ENCODE measurements at regions of chr21 and their contacts with region 1.

Region 1: DNA sequence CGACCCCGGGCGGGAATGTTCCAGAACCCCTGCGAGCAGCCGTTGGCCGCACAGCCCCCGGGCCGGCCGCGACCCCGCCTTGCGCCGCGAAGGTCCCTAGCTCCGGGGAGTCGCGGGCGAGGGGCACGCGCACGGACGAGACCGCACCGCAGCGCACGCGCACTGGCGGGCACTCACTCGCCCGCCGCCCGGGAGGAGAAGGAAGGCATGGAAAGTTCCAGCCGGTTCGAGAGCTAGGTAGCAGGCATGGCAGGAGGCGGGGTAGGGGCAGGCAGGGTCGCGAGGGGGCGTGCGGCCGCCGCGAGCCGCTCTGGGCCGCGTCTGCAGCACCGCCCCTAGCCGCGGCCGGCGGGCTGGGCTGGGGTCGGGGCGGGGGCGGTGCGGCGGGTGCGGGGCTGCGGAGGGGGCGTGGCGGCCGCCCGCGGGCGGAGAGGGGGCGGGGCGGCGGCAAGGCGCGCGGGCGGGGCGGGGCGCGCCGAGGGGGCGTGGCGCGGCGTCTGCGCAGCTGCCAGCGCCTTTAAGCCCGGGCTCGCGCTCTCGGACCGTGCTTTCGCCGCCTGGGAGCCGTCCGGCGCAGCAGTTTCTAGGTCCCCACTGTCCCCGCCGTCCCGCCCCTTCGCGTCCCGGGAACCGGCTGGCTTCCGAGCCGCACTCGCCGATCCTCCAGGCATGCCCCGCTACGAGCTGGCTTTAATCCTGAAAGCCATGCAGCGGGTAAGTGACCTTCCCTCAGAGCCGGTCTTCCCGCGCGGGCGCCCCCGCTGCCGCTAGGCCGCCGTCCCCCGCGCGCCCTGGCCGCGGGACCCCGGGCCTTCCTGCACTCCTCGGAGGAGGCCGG is at the starts of genes MRPS6 and SLC5A3:
- DNase-seq: peak; percentile 58 to 87 (median 75)
- H3K4me3 ChIP-seq: peak within 1 kb of the TSS; percentile 65 to 89 (median 75)
- H3K27ac ChIP-seq: peak within 1 kb of the TSS; percentile 83 to 100 (median 95)
- H3K27me3 ChIP-seq: no peaks in the 10 kb centered on the region
- CTCF ChIP-seq: peak in 7 of 56 donors; percentile 2 to 20 (median 11)
- total RNA-seq, gene MRPS6: 22.1 to 132 (median 50.4) TPM
- total RNA-seq, gene SLC5A3: 11.1 to 102 (median 27.3) TPM

Region 2: GRCh38 chr21:33884376-33885171 is 188.7 kb before region 1 on chr21:
- intact Hi-C with region 1: no loop called
- DNase-seq: peak in 1 of 10 donors; percentile 27
- H3K4me3 ChIP-seq: no peak overlapping the region
- H3K27ac ChIP-seq: peak overlapping the region in 4 of 59 donors; percentile 6 to 69 (median 36)
- H3K27me3 ChIP-seq: no peaks in the 10 kb centered on the region
- CTCF ChIP-seq: no peak

Region 3: GRCh38 chr21:33924079-33924765 is 149.0 kb before region 1 on chr21:
- intact Hi-C with region 1: loop called in 1 of 2 experiments (anchors 2 kb)
- DNase-seq: peak; percentile 84 to 94 (median 90)
- H3K4me3 ChIP-seq: peak overlapping the region in 18 of 59 donors; percentile 5 to 43 (median 24)
- H3K27ac ChIP-seq: peak overlapping the region; percentile 51 to 98 (median 91)
- H3K27me3 ChIP-seq: no peaks in the 10 kb centered on the region
- CTCF ChIP-seq: peak; percentile 81 to 99 (median 97)

Region 4: DNA sequence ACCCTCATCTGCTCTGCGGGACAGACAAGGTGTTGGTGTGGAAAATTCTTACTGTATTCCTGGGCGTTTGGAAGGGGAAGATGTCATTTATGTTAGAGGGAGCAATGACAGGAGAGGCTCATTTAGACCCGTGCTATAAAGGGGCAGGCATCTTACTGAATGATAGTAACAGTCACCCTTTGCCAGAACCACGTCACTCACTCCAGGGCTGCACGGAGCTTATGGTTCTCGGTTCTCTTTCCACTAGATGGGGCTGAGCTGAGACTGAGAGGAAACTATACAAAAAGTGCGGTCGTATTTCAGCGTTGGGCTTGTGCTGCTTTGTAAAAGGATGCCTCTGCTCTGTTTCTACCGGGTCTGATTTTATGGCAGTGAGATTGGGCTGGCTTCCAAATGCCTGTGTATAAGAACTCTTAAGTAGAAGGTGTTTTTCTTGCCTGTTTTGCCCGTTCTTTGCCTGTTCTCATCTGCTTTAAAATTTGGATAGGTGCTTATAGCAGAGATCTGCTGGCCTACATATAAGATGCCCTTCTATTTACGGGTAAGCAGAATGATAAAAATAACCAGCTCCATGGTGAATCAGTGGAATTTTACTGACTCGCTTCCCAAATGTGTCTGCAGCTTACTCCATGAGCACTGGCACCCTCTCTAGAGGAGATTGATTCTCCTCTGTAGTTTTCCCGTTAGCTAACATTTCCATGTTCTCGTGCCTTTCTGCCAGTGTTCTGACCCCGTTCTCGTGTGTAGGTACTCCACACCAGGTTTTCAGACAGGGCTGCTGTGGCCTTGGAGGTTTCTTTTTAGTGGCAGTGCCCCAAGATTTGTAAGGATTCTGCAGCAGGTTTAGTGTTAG is 56.0 kb after region 1 on chr21:
- intact Hi-C with region 1: loop called in 1 of 2 experiments (anchors 5 kb)
- DNase-seq: peak in 7 of 10 donors; percentile 46 to 74 (median 63)
- H3K4me3 ChIP-seq: peak overlapping the region in 44 of 59 donors; percentile 1 to 43 (median 22)
- H3K27ac ChIP-seq: peak overlapping the region in 58 of 59 donors; percentile 56 to 98 (median 90)
- H3K27me3 ChIP-seq: peaks cover 0 to 5% (median 0%) of the 10 kb centered on the region in 45 donors
- CTCF ChIP-seq: peak in 54 of 56 donors; percentile 17 to 65 (median 45)

Region 5: GRCh38 chr21:34180826-34181359 is 107.6 kb after region 1 on chr21:
- intact Hi-C with region 1: loop called in 1 of 2 experiments (anchors 5 kb)
- DNase-seq: no peak
- H3K4me3 ChIP-seq: peak overlapping the region in 48 of 59 donors; percentile 2 to 55 (median 28)
- H3K27ac ChIP-seq: peak overlapping the region in 40 of 59 donors; percentile 0 to 77 (median 44)
- H3K27me3 ChIP-seq: peaks cover 0 to 6% (median 0%) of the 10 kb centered on the region in 45 donors
- CTCF ChIP-seq: peak in 14 of 56 donors; percentile 7 to 42 (median 22)

Region 6: DNA sequence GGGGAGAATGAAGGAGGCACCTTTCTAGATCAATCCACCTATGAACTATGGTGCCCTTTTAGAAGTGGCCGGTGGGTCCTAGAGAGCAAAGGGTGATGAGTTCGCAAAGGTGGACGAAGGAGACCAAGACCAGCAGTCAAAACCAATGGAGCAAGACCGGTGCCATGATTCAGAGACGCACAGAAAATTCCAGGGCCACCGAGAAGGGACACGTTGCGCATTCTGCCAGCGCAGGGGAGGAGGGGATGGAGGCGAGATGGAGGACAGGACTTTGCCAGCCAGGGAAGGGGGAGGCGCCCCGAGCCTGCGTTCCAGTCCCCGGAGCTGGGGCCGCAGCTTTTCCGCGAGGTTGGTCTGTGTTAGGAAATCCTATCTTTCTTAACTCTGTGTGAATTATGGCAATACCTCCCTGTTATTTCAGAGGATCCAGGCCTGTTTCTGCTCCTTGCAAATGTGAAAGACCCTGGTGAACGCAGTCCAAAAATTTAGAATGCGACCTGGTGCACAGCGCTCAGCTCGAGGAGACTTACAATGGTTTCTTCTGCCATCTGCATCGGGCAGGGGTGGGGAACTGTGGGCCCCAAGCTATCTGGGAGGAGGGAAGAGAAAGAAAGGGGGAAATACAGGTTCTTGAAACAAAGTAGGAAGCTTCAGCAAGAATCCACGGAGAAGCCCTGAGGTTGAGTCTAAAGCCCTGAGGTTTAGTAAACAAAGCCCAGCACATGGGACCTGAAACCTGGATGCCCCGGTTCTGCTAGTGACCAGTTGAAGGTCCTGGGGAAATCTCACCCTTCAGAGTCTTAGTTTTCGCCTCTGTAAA is 129.5 kb after region 1 on chr21:
- intact Hi-C with region 1: loop called (anchors 5 kb)
- DNase-seq: peak in 1 of 10 donors; percentile 6
- H3K4me3 ChIP-seq: peak overlapping the region in 29 of 59 donors; percentile 1 to 74 (median 63)
- H3K27ac ChIP-seq: peak overlapping the region in 53 of 59 donors; percentile 7 to 95 (median 79)
- H3K27me3 ChIP-seq: peaks cover 0 to 3% (median 0%) of the 10 kb centered on the region in 45 donors
- CTCF ChIP-seq: no peak

Region 7: DNA sequence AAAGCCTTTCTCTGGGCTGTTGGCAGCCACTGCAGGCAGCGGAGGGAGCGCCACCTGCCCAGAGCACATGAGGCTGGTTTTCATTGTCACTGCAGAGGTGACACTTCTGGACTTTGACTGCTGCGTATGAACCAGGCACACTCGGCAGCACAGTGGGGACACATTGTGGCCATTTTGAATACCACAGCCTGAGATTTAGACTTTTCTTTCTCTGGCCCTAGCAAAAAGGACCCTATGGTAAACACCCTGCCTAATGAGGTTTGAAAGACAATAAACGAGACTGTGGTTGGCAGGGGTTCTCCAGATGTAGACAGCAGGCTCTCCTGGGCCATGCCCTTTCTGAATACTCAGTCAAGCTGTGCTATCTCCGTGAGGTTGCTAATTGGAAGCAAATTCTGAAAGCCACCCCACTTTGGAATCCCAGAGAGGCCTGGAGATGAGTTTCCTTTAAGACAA is 278.6 kb after region 1 on chr21:
- intact Hi-C with region 1: loop called (anchors 2 to 5 kb)
- DNase-seq: peak in 9 of 10 donors; percentile 43 to 71 (median 63)
- H3K4me3 ChIP-seq: no peak overlapping the region
- H3K27ac ChIP-seq: peak overlapping the region in 18 of 59 donors; percentile 2 to 66 (median 36)
- H3K27me3 ChIP-seq: no peaks in the 10 kb centered on the region
- CTCF ChIP-seq: peak; percentile 67 to 93 (median 82)

Region 8: GRCh38 chr21:34603002-34603709 is 529.9 kb after region 1 on chr21:
- intact Hi-C with region 1: loop called in 1 of 2 experiments (anchors 10 kb)
- DNase-seq: peak; percentile 87 to 96 (median 90)
- H3K4me3 ChIP-seq: peak overlapping the region in 1 of 59 donors; percentile 8
- H3K27ac ChIP-seq: peak overlapping the region in 55 of 59 donors; percentile 0 to 96 (median 79)
- H3K27me3 ChIP-seq: no peaks in the 10 kb centered on the region
- CTCF ChIP-seq: peak; percentile 39 to 93 (median 85)

Measured in dorsolateral prefrontal cortex (tissue), 120 donors.